Psoas muscle (tissue), 8 donors: ENCODE measurements at regions of chr11 and their contacts with region 1.

Region 1: DNA sequence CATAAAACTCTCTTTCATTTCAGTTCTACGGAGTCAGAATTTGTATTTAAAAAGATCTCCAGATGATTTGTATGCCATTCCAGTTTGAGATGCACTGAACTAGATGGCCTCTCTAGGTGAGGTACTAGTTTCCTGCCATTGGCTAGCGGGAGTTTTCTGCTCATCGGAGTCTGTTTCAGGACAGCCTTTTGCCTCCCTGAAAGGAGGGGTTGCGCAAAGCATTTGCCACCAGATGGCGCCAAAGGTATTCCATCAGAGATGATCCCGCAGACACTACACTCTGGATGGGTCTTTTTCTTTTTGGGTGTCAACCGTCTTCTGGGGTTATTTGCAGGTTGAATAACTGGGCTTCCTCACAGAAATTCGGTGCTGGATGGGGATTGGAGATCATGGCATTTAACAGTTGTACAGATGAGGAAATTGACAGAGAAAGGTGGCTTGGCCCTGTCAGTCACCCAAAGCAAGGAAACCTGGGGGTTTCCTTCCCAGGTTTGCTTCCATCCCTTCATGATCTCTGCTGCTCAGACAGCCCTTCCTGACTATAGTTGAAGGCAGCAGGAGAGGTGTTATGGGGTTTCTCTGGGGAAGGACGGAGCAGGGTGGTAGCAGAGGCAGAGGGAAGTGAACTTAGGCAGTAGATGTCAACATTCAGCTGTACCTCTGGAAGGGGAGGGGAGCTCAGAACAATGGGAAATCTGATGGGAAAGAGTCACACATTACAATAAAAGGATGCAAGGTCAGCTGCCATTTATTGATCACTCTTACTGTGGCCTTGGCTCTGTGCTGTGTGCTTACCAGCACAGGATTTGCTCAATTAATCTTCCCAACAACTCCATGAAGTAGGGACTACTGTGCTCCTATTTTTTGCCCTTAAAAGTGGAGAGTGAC is 81.6 kb downstream of the CCDC81 start:
- DNase-seq: peak; percentile 82 to 86
- ATAC-seq: peak; percentile 82 to 92 (median 84)
- H3K4me3 ChIP-seq: no peak overlapping the region
- H3K27ac ChIP-seq: no peak overlapping the region
- H3K4me1 ChIP-seq: peaks cover 4% of the 10 kb centered on the region
- H3K27me3 ChIP-seq: no peaks in the 10 kb centered on the region
- CTCF ChIP-seq: peak; percentile 93

Region 2: GRCh38 chr11:86302100-86302793 is 154.0 kb before region 1 on chr11 and contains the start of gene HIKESHI:
- intact Hi-C with region 1: no loop called
- DNase-seq: peak; percentile 100
- ATAC-seq: peak; percentile 97 to 99 (median 98)
- H3K4me3 ChIP-seq: peak within 1 kb of the TSS; percentile 89
- H3K27ac ChIP-seq: peak within 1 kb of the TSS; percentile 93
- H3K4me1 ChIP-seq: peaks cover 18% of the 10 kb centered on the region
- H3K27me3 ChIP-seq: no peaks in the 10 kb centered on the region
- CTCF ChIP-seq: no peak
- total RNA-seq, gene HIKESHI: 39.6 to 45.7 (median 41.4) TPM

Region 3: DNA sequence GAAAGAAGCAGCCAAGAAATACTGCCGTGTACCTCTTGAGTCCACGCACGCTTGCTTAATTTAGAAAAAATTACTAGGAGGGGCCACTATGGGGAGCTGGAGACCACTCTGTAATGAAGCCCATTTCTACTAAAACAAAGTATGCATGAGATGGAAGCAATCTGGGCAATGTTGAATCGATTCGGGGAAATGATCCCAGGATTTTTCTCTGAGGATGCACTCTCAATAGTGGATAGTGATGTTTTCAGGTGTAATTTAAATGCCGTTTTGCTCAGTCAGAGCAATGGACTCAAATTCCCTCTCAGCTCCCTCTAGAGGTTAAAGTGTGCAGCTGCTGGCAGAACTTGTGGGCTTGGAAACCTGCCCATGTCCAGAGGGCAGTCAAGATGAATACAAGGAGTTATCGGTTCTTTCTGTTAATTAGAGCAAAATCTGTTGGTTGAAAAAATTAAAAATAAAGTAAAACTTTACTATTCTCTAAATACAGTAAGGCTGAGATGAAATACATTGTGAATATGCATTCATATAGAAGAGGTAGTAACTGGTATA is 152.0 kb after region 1 on chr11:
- intact Hi-C with region 1: loop called in 1 of 2 experiments (anchors 2 kb)
- DNase-seq: peak; percentile 56 to 81
- ATAC-seq: peak; percentile 80 to 96 (median 92)
- H3K4me3 ChIP-seq: peak overlapping the region; percentile 37
- H3K27ac ChIP-seq: peak overlapping the region; percentile 4
- H3K4me1 ChIP-seq: peaks cover 13% of the 10 kb centered on the region
- H3K27me3 ChIP-seq: no peaks in the 10 kb centered on the region
- CTCF ChIP-seq: peak; percentile 95

Region 4: GRCh38 chr11:86678823-86679222 is 222.5 kb after region 1 on chr11:
- intact Hi-C with region 1: no loop called
- DNase-seq: no peak
- ATAC-seq: no peak
- H3K4me3 ChIP-seq: no peak overlapping the region
- H3K27ac ChIP-seq: no peak overlapping the region
- H3K4me1 ChIP-seq: peaks cover 20% of the 10 kb centered on the region
- H3K27me3 ChIP-seq: no peaks in the 10 kb centered on the region
- CTCF ChIP-seq: no peak

Region 5: GRCh38 chr11:86719781-86720463 is 263.6 kb after region 1 on chr11:
- intact Hi-C with region 1: no loop called
- DNase-seq: no peak
- ATAC-seq: no peak
- H3K4me3 ChIP-seq: no peak overlapping the region
- H3K27ac ChIP-seq: no peak overlapping the region
- H3K4me1 ChIP-seq: no peaks in the 10 kb centered on the region
- H3K27me3 ChIP-seq: no peaks in the 10 kb centered on the region
- CTCF ChIP-seq: no peak

Region 6: GRCh38 chr11:86802601-86803051 is 346.3 kb after region 1 on chr11:
- intact Hi-C with region 1: loop called in 1 of 2 experiments (anchors 1 kb)
- DNase-seq: no peak
- ATAC-seq: peak in 1 of 4 donors; percentile 48
- H3K4me3 ChIP-seq: peak overlapping the region; percentile 78
- H3K27ac ChIP-seq: no peak overlapping the region
- H3K4me1 ChIP-seq: peaks cover 15% of the 10 kb centered on the region
- H3K27me3 ChIP-seq: no peaks in the 10 kb centered on the region
- CTCF ChIP-seq: peak; percentile 60

Region 7: GRCh38 chr11:86818466-86819192 is 362.3 kb after region 1 on chr11:
- intact Hi-C with region 1: loop called (anchors 1 to 2 kb)
- DNase-seq: no peak
- ATAC-seq: peak in 3 of 4 donors; percentile 43 to 72 (median 46)
- H3K4me3 ChIP-seq: peak overlapping the region; percentile 25
- H3K27ac ChIP-seq: no peak overlapping the region
- H3K4me1 ChIP-seq: peaks cover 33% of the 10 kb centered on the region
- H3K27me3 ChIP-seq: no peaks in the 10 kb centered on the region
- CTCF ChIP-seq: peak; percentile 81

Region 8: GRCh38 chr11:86919557-86920210 is 463.4 kb after region 1 on chr11:
- intact Hi-C with region 1: loop called in 1 of 2 experiments (anchors 10 kb)
- DNase-seq: no peak
- ATAC-seq: peak in 3 of 4 donors; percentile 46 to 71 (median 61)
- H3K4me3 ChIP-seq: no peak overlapping the region
- H3K27ac ChIP-seq: peak overlapping the region; percentile 52
- H3K4me1 ChIP-seq: peaks cover 3% of the 10 kb centered on the region
- H3K27me3 ChIP-seq: no peaks in the 10 kb centered on the region
- CTCF ChIP-seq: peak; percentile 58